Naive thymus-derived CD4-positive, alpha-beta T cell (primary cell): ENCODE measurements at regions of chr18 and their contacts with region 1.

Region 1: DNA sequence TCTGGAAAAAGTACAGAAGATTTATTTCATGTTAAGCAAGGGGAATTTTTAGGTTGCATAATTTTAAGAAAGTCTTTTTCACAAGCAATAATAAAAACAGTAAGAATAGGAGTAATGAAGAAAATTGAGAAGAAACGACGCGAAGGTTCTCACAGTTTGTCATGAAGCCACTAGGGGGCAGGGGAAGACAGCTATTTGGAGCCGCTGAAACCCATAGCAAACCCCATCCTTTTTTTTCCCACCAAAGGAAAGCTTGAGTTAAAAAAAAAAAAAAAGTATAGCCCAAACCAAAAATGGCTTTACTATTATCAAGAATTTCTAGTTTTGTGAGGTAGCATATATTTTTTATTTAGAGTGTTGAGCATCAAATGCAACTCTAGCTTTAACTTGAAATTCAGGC is 300.9 kb downstream of the PHLPP1 start:
- DNase-seq: peak in 7 of 9 donors; percentile 34 to 65 (median 56)
- ATAC-seq: peak; percentile 77
- H3K4me3 ChIP-seq: no peak overlapping the region
- H3K4me3 Mint-ChIP-seq: no peak overlapping the region
- H3K27ac ChIP-seq: no peak overlapping the region
- H3K27ac Mint-ChIP-seq: no peak overlapping the region
- H3K4me1 ChIP-seq: no peaks in the 10 kb centered on the region
- H3K4me1 Mint-ChIP-seq: peaks cover 0 to 2% (median 0%) of the 10 kb centered on the region in 7 donors
- H3K27me3 ChIP-seq: no peaks in the 10 kb centered on the region
- H3K27me3 Mint-ChIP-seq: peaks cover 7 to 61% (median 13%) of the 10 kb centered on the region in 5 donors

Region 2: DNA sequence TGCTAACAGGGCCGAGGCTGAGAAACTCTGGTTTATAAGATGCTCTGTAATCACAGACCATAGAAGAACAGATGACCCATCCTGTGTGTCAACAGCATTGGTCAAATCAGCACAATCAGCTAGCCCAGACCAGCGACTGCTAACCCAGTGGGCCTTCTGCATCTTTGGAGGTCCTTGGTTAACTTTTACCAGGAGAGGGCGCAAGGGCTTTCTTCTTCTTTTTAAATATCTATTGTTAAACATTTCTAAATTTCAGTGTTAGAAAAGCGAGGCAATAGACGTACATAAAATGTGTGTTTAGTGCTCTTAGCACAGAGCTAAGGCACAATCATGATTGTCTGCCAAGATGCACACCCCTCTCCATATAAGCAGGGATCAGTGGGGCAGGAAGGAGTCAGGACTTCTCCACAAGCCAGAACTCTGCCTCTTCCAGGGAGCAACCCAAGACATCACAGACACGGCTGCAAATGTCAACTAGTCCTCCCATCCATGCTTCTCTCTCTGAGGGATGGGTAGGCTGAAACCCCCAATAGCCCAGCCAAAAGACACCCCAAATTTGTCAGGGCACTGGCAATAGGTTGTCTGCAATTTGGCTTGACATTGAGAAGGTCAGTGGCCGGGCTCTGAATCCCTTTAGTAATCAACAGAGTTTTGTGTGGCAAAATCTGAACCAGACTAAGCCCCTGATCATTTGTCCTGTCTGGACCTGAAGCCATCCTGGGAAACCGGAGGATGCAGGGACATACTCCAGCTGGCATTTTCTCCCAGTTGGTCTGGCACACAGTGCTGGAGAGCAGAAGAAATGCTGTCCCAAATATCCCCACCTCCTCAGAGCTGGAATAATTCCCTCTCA is 115.1 kb after region 1 on chr18:
- CTCF ChIA-PET with region 1: interaction called, 5 read pairs
- POLR2A ChIA-PET with region 1: no interaction called
- intact Hi-C with region 1: loop called (anchors 1 to 2 kb)
- DNase-seq: peak in 7 of 9 donors; percentile 51 to 71 (median 69)
- ATAC-seq: peak; percentile 80
- H3K4me3 ChIP-seq: no peak overlapping the region
- H3K4me3 Mint-ChIP-seq: peak overlapping the region in 9 of 10 donors; percentile 13 to 81 (median 45)
- H3K27ac ChIP-seq: peak overlapping the region; percentile 61
- H3K27ac Mint-ChIP-seq: peak overlapping the region in 8 of 9 donors; percentile 36 to 94 (median 83)
- H3K4me1 ChIP-seq: peaks cover 9 to 18% of the 10 kb centered on the region in 2 donors
- H3K4me1 Mint-ChIP-seq: peaks cover 28 to 58% (median 50%) of the 10 kb centered on the region in 7 donors
- H3K27me3 ChIP-seq: no peaks in the 10 kb centered on the region
- H3K27me3 Mint-ChIP-seq: no peaks in the 10 kb centered on the region

Region 3: DNA sequence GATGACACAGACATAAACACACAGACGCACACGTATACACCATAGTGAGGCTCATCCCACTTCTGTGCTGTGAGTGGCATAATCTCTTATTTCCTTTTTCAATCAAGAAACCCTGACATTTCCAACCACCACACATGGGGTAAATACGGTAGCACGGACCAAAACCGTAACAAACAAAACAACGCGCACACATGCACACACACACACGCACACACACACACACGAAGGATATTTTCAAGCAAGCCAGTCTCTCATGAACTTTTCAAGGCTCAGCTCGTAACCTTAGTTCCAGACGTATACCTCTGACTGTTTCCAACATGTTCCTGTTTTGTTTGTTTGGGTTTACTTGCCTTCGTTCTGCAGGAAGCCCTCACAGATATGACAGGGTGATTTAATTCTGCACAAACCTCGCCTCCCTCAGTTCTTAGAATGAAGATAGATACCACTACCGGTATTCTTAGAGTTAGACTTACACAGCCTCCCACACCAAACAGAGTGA is 183.5 kb after region 1 on chr18:
- CTCF ChIA-PET with region 1: no interaction called
- POLR2A ChIA-PET with region 1: no interaction called
- intact Hi-C with region 1: loop called in 1 of 2 experiments (anchors 5 kb)
- DNase-seq: peak in 7 of 9 donors; percentile 57 to 82 (median 74)
- ATAC-seq: peak; percentile 84
- H3K4me3 ChIP-seq: peak overlapping the region; percentile 63
- H3K4me3 Mint-ChIP-seq: no peak overlapping the region
- H3K27ac ChIP-seq: peak overlapping the region; percentile 73
- H3K27ac Mint-ChIP-seq: no peak overlapping the region
- H3K4me1 ChIP-seq: peaks cover 37 to 71% of the 10 kb centered on the region in 2 donors
- H3K4me1 Mint-ChIP-seq: peaks cover 19 to 49% (median 33%) of the 10 kb centered on the region in 7 donors
- H3K27me3 ChIP-seq: no peaks in the 10 kb centered on the region
- H3K27me3 Mint-ChIP-seq: no peaks in the 10 kb centered on the region

Region 4: DNA sequence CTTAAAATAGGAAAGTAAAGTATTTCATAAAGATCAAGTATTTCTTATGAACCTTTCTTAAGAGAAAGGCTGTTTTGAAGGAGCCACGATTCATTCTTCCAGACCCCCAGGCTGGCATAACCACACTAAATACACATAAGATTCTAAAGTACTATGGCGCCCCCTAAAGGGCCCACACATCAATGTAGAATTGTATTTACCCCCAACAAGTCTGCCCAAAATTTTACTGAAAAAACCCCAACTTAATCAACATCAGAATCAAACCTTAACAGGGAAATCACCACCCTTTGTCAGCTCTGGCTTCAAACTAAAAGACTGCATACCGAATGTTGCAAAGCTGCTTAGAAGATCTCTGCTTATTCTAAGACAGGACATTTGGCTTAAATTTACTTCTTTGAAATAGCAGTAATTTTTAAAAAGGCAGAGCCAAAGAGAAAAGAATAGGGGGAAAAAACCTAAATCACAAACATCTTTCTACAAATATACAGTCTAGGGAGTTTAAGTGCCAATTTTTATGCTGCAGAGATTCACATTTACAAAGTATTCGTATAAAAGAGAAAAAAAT is 323.7 kb after region 1 on chr18:
- CTCF ChIA-PET with region 1: interaction called, 24 read pairs
- POLR2A ChIA-PET with region 1: interaction called, 4 read pairs
- intact Hi-C with region 1: loop called (anchors 1 kb)
- DNase-seq: peak in 7 of 9 donors; percentile 29 to 59 (median 51)
- ATAC-seq: peak; percentile 82
- H3K4me3 ChIP-seq: no peak overlapping the region
- H3K4me3 Mint-ChIP-seq: no peak overlapping the region
- H3K27ac ChIP-seq: no peak overlapping the region
- H3K27ac Mint-ChIP-seq: peak overlapping the region in 1 of 9 donors; percentile 29
- H3K4me1 ChIP-seq: no peaks in the 10 kb centered on the region
- H3K4me1 Mint-ChIP-seq: peaks cover 0 to 9% (median 5%) of the 10 kb centered on the region in 7 donors
- H3K27me3 ChIP-seq: no peaks in the 10 kb centered on the region
- H3K27me3 Mint-ChIP-seq: no peaks in the 10 kb centered on the region

Region 5: DNA sequence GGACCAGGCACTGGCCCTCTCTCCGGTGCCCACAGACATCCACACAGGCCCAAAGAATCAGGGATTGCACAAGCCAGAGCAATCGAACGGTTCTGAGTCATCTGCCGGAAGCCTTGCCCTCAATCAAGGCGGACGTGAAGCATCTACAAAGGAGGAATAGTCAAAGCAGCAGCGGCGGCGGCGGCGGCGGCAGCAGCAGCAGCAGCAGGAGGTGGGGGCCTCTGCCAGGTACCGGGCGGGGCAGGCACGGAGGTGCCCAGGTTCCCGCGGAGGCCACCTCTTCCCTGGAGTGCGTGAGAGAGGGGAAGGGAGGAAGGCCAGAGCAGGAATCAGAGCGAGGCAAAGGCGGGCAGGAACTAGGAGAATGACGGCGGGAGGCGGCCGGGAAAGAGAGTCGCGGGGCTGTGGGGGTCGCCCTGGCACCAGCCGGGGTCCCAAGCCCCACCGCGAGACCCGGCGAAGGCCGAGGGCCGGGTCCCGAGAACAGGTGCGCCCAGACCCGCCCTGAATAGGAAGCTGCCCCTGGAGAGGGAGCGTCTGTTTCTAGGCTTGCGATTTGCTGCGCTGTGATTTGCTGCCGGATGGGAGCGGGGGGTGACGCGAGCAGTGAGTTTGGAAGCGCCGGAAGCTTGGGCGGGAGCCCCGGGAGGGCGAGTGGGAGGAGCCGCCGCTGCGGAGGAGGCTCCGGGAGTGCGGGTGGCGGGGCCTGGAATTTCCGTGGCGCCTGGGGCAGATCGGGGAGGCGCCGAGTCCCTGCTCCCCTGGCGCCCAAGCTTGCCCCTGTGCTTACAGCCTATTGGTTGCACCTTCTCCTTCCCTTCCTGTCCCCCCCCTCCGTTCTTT is 953.9 kb after region 1 on chr18 and contains the start of gene SERPINB8:
- CTCF ChIA-PET with region 1: no interaction called
- POLR2A ChIA-PET with region 1: no interaction called
- intact Hi-C with region 1: loop called in 1 of 2 experiments (anchors 10 kb)
- DNase-seq: peak; percentile 44 to 84 (median 77)
- ATAC-seq: peak; percentile 89
- H3K4me3 ChIP-seq: peak within 1 kb of the TSS; percentile 93
- H3K4me3 Mint-ChIP-seq: peak within 1 kb of the TSS; percentile 88 to 98 (median 94)
- H3K27ac ChIP-seq: peak within 1 kb of the TSS; percentile 96
- H3K27ac Mint-ChIP-seq: peak within 1 kb of the TSS; percentile 92 to 97 (median 94)
- H3K4me1 ChIP-seq: peaks cover 13% of the 10 kb centered on the region in 2 donors
- H3K4me1 Mint-ChIP-seq: peaks cover 26 to 42% (median 31%) of the 10 kb centered on the region in 7 donors
- H3K27me3 ChIP-seq: no peaks in the 10 kb centered on the region
- H3K27me3 Mint-ChIP-seq: peaks cover 0 to 25% (median 1%) of the 10 kb centered on the region in 5 donors
- total RNA-seq, gene SERPINB8: 9.2 to 15.7 (median 10.0) TPM